IMR-90 (cell line): ENCODE measurements at regions of chr4 and their contacts with region 1.

Region 1: DNA sequence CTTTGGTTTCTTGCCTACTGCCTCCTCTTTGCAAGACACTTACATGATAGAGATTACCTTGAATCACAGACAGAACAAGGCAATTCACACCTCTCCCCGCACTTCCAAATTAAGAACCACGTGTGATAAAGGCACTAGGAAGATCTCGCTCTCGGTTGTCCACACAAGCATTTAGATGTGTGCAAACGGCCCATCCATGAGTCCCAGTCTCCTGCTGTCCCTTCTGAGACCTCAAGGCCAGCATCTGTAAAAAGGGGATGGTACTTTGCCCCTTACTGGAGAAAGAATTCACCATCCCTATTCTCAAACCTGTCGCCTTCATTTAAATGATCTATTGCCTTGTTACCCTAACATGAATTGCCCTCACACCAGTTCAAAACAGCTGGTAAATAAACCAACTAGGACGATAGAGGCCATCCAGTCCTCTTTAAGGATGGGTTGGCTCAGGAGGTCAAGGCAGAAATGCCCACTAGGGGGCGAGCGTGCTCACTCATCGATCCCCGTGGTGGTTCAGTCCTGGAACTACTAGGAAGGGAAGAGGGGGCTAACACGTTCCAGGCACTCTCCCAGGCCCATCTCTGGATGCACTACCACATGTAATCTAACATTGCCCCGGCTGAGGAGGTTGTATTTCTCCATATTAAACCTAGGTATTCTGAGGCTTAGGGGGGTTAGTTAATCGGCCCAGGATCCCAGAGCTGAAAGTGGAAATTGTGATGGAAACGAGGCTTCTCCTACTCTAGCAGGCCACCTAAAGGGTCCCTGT is 95.8 kb downstream of the DHX15 start:
- DNase-seq: peak; percentile 62
- ATAC-seq: peak; percentile 95
- H3K4me3 ChIP-seq: no peak overlapping the region
- H3K27ac ChIP-seq: no peak overlapping the region
- H3K4me1 ChIP-seq: no peaks in the 10 kb centered on the region
- H3K27me3 ChIP-seq: peaks cover 22% of the 10 kb centered on the region
- CTCF ChIP-seq: peak; percentile 86
- POLR2A ChIP-seq: no peak
- RAD21 ChIP-seq: peak; percentile 84

Region 2: GRCh38 chr4:24551492-24552289 is 63.1 kb after region 1 on chr4:
- CTCF ChIA-PET with region 1: interaction called, 8 read pairs
- POLR2A ChIA-PET with region 1: no interaction called
- dilution Hi-C with region 1: no loop called
- in situ Hi-C with region 1: no loop called
- intact Hi-C with region 1: loop called (anchors 1 kb)
- DNase-seq: peak; percentile 70
- ATAC-seq: peak; percentile 61
- H3K4me3 ChIP-seq: no peak overlapping the region
- H3K27ac ChIP-seq: peak overlapping the region; percentile 59; the same call in 1 of the 2 replicates
- H3K4me1 ChIP-seq: peaks cover 7% of the 10 kb centered on the region
- H3K27me3 ChIP-seq: no peaks in the 10 kb centered on the region
- CTCF ChIP-seq: peak; percentile 51
- POLR2A ChIP-seq: no peak
- RAD21 ChIP-seq: no peak

Region 3: GRCh38 chr4:24686871-24687680 is 198.5 kb after region 1 on chr4:
- CTCF ChIA-PET with region 1: no interaction called
- POLR2A ChIA-PET with region 1: no interaction called
- dilution Hi-C with region 1: no loop called
- in situ Hi-C with region 1: loop called (anchors 25 kb)
- intact Hi-C with region 1: no loop called
- DNase-seq: no peak
- ATAC-seq: no peak
- H3K4me3 ChIP-seq: no peak overlapping the region
- H3K27ac ChIP-seq: no peak overlapping the region
- H3K4me1 ChIP-seq: peaks cover 3% of the 10 kb centered on the region; the same call in 1 of the 2 replicates
- H3K27me3 ChIP-seq: peaks cover 7% of the 10 kb centered on the region
- CTCF ChIP-seq: peak; percentile 35
- POLR2A ChIP-seq: no peak
- RAD21 ChIP-seq: peak; percentile 48

Region 4: DNA sequence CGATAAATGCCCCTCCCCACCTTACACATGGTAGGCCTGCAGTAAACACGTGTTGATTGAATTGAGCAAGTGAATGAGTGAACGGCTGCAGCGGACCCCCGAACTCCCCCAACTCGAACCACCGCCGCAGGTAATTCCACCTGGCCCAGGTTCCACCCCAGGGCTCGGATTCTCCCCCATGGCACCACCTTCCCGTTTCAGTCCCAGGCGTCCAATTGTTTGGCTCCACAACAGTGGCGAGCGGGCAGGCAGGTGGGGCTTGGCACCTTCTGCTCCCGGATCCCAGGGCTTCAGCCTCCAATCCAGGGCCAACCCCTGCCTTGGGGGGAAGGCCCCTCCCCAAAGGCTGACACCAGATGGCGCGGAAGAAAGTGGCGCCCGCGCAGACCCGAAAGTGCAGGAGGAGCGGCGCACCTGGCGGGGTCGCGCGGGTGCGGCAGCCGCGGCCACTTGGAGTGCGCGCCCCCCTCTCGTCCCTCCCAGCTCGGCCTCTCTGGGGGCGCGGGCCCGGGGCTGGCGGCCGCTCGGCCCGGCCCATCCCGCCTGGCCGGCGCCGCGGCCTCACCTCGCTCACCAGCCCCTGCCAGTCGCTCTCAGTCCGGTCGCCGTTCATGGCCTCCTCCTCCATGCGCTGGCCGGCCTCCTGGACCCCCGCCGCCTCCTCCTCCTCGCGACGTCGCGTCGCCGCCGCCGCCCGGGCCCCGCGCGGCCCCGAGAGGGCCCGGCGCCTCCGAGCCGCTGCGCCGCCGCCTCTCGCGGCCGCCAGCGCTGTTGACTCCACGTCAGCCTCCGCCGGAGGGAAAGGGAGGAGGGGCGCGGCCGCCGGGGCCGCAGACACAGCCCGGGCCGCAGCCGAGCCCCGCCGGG is 423.9 kb after region 1 on chr4 and contains the start of gene CCDC149:
- CTCF ChIA-PET with region 1: no interaction called
- POLR2A ChIA-PET with region 1: no interaction called
- dilution Hi-C with region 1: no loop called
- in situ Hi-C with region 1: no loop called
- intact Hi-C with region 1: loop called (anchors 5 kb)
- DNase-seq: peak; percentile 57
- ATAC-seq: peak; percentile 94
- H3K4me3 ChIP-seq: peak within 1 kb of the TSS; percentile 70
- H3K27ac ChIP-seq: peak within 1 kb of the TSS; percentile 56
- H3K4me1 ChIP-seq: peaks cover 6% of the 10 kb centered on the region
- H3K27me3 ChIP-seq: no peaks in the 10 kb centered on the region
- CTCF ChIP-seq: no peak
- POLR2A ChIP-seq: peak; percentile 58; the same call in 1 of the 2 replicates
- RAD21 ChIP-seq: no peak
- total RNA-seq, gene CCDC149: 7.0 and 8.3 TPM in 2 replicates

Region 5: GRCh38 chr4:24988776-24989175 is 500.2 kb after region 1 on chr4:
- CTCF ChIA-PET with region 1: no interaction called
- POLR2A ChIA-PET with region 1: no interaction called
- dilution Hi-C with region 1: no loop called
- in situ Hi-C with region 1: loop called (anchors 5 kb)
- intact Hi-C with region 1: loop called (anchors 2 kb)
- DNase-seq: peak; percentile 51
- ATAC-seq: peak; percentile 85
- H3K4me3 ChIP-seq: no peak overlapping the region
- H3K27ac ChIP-seq: no peak overlapping the region
- H3K4me1 ChIP-seq: no peaks in the 10 kb centered on the region
- H3K27me3 ChIP-seq: peaks cover 6% of the 10 kb centered on the region
- CTCF ChIP-seq: peak; percentile 64
- POLR2A ChIP-seq: no peak
- RAD21 ChIP-seq: peak; percentile 76

Region 6: DNA sequence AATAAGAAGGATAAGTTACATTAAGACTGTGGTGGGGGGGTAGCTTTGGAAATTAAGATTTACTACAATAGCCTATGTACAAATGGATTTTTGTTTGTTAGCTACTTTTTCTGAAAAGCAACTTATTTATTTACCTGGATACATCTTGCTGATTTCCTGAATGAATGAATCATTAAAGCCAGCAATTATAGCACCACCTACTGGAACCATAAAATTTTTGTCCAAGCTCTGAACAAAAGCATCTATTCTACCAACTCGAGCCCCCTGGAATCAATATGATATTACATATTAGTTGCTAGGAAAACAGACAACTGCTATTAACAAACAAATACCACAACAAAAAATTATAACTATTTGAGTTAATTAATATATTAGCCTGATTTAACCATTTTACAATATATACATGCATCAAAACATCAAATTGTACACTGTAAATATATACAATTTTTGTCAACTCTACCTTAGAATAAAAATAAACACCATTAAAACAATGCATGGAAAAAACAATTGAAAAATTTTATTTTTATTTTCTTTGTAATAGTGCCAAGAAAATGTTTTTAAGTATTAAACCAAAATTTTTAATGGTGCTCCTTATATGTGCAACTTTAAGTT is 656.4 kb after region 1 on chr4:
- CTCF ChIA-PET with region 1: no interaction called
- POLR2A ChIA-PET with region 1: no interaction called
- dilution Hi-C with region 1: no loop called
- in situ Hi-C with region 1: no loop called
- intact Hi-C with region 1: loop called (anchors 5 kb)
- DNase-seq: peak; percentile 21
- ATAC-seq: no peak
- H3K4me3 ChIP-seq: no peak overlapping the region
- H3K27ac ChIP-seq: no peak overlapping the region
- H3K4me1 ChIP-seq: no peaks in the 10 kb centered on the region
- H3K27me3 ChIP-seq: no peaks in the 10 kb centered on the region
- CTCF ChIP-seq: peak; percentile 57
- POLR2A ChIP-seq: no peak
- RAD21 ChIP-seq: peak; percentile 54

Region 7: GRCh38 chr4:25271866-25272265 is 783.3 kb after region 1 on chr4:
- CTCF ChIA-PET with region 1: no interaction called
- POLR2A ChIA-PET with region 1: no interaction called
- dilution Hi-C with region 1: no loop called
- in situ Hi-C with region 1: no loop called
- intact Hi-C with region 1: no loop called
- DNase-seq: no peak
- ATAC-seq: no peak
- H3K4me3 ChIP-seq: no peak overlapping the region
- H3K27ac ChIP-seq: no peak overlapping the region
- H3K4me1 ChIP-seq: no peaks in the 10 kb centered on the region
- H3K27me3 ChIP-seq: no peaks in the 10 kb centered on the region
- CTCF ChIP-seq: no peak
- POLR2A ChIP-seq: no peak
- RAD21 ChIP-seq: no peak

Region 8: DNA sequence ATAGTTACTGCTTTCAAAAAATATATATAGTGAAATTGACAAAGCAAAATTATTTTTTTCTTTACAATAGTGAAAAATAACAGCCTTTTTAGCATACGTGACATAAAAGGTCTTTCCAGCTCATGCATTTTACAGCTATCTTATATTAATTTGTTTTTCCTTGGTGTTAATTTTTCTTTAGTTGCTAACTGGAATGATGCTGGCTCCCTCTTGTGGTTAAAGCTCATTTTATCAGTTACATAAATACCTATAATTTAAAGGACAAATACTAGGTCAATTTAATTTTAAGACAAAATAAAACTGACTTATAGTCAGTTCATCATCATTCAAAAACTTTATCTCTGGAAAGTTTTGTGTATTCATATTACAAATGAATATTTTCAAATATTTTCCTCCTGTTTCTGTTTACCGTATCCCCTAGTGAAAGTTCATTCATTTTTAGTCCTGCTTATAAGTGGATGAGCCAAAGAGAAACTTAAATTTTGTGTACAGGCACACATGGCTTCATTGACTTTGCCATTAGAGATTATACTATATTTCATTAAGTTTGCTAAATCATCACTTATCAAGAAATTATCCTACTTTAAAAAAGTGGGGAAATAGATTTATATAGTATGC is 878.5 kb after region 1 on chr4:
- CTCF ChIA-PET with region 1: no interaction called
- POLR2A ChIA-PET with region 1: no interaction called
- dilution Hi-C with region 1: no loop called
- in situ Hi-C with region 1: no loop called
- intact Hi-C with region 1: loop called (anchors 5 kb)
- DNase-seq: peak; percentile 59
- ATAC-seq: peak; percentile 49
- H3K4me3 ChIP-seq: no peak overlapping the region
- H3K27ac ChIP-seq: no peak overlapping the region
- H3K4me1 ChIP-seq: no peaks in the 10 kb centered on the region
- H3K27me3 ChIP-seq: no peaks in the 10 kb centered on the region
- CTCF ChIP-seq: peak; percentile 79
- POLR2A ChIP-seq: no peak
- RAD21 ChIP-seq: peak; percentile 81